CD4-positive, alpha-beta T cell (primary cell): ENCODE measurements at regions of chr12 and their contacts with region 1.

Region 1: GRCh38 chr12:108457006-108457733 is 57.9 kb upstream of the FICD start:
- DNase-seq: peak in 3 of 14 experiments; percentile 31 to 65 (median 45)
- ATAC-seq: peak; percentile 26
- H3K4me3 ChIP-seq: no peak overlapping the region
- H3K4me3 Mint-ChIP-seq: no peak overlapping the region
- H3K27ac ChIP-seq: no peak overlapping the region
- H3K27ac Mint-ChIP-seq: no peak overlapping the region
- H3K4me1 ChIP-seq: no peaks in the 10 kb centered on the region
- H3K4me1 Mint-ChIP-seq: no peaks in the 10 kb centered on the region
- H3K27me3 ChIP-seq: peaks cover 5 to 8% of the 10 kb centered on the region in 2 experiments
- H3K27me3 Mint-ChIP-seq: peaks cover 54% of the 10 kb centered on the region
- CTCF ChIP-seq: peak; percentile 39

Region 2: GRCh38 chr12:107983756-107984472 is 473.3 kb before region 1 on chr12:
- CTCF ChIA-PET with region 1: no interaction called
- POLR2A ChIA-PET with region 1: no interaction called
- intact Hi-C with region 1: loop called in 1 of 2 experiments (anchors 10 kb)
- DNase-seq: no peak
- ATAC-seq: no peak
- H3K4me3 ChIP-seq: no peak overlapping the region
- H3K4me3 Mint-ChIP-seq: no peak overlapping the region
- H3K27ac ChIP-seq: no peak overlapping the region
- H3K27ac Mint-ChIP-seq: no peak overlapping the region
- H3K4me1 ChIP-seq: no peaks in the 10 kb centered on the region
- H3K4me1 Mint-ChIP-seq: no peaks in the 10 kb centered on the region
- H3K27me3 ChIP-seq: no peaks in the 10 kb centered on the region
- H3K27me3 Mint-ChIP-seq: peaks cover 30% of the 10 kb centered on the region
- CTCF ChIP-seq: no peak

Region 3: GRCh38 chr12:107992870-107993451 is 464.2 kb before region 1 on chr12:
- CTCF ChIA-PET with region 1: no interaction called
- POLR2A ChIA-PET with region 1: no interaction called
- intact Hi-C with region 1: loop called (anchors 2 to 10 kb)
- DNase-seq: peak in 3 of 14 experiments; percentile 13 to 21 (median 13)
- ATAC-seq: no peak
- H3K4me3 ChIP-seq: no peak overlapping the region
- H3K4me3 Mint-ChIP-seq: no peak overlapping the region
- H3K27ac ChIP-seq: no peak overlapping the region
- H3K27ac Mint-ChIP-seq: no peak overlapping the region
- H3K4me1 ChIP-seq: no peaks in the 10 kb centered on the region
- H3K4me1 Mint-ChIP-seq: no peaks in the 10 kb centered on the region
- H3K27me3 ChIP-seq: no peaks in the 10 kb centered on the region
- H3K27me3 Mint-ChIP-seq: peaks cover 48% of the 10 kb centered on the region
- CTCF ChIP-seq: no peak

Region 4: GRCh38 chr12:108099073-108099472 is 358.1 kb before region 1 on chr12:
- CTCF ChIA-PET with region 1: no interaction called
- POLR2A ChIA-PET with region 1: no interaction called
- intact Hi-C with region 1: loop called in 1 of 2 experiments (anchors 10 kb)
- DNase-seq: peak in 2 of 14 experiments; percentile 7 to 40
- ATAC-seq: no peak
- H3K4me3 ChIP-seq: no peak overlapping the region
- H3K4me3 Mint-ChIP-seq: no peak overlapping the region
- H3K27ac ChIP-seq: no peak overlapping the region
- H3K27ac Mint-ChIP-seq: no peak overlapping the region
- H3K4me1 ChIP-seq: no peaks in the 10 kb centered on the region
- H3K4me1 Mint-ChIP-seq: no peaks in the 10 kb centered on the region
- H3K27me3 ChIP-seq: peaks cover 0 to 2% of the 10 kb centered on the region in 2 experiments
- H3K27me3 Mint-ChIP-seq: peaks cover 41% of the 10 kb centered on the region
- CTCF ChIP-seq: no peak